Dorsolateral prefrontal cortex (tissue), 120 donors: ENCODE measurements at regions of chr19 and their contacts with region 1.

Region 1: GRCh38 chr19:2944775-2945574 is at the start of gene ZNF77:
- DNase-seq: peak; percentile 97 to 100 (median 99)
- H3K4me3 ChIP-seq: peak within 1 kb of the TSS; percentile 71 to 100 (median 92)
- H3K27ac ChIP-seq: peak within 1 kb of the TSS in 56 of 59 donors; percentile 4 to 93 (median 83)
- H3K27me3 ChIP-seq: no peaks in the 10 kb centered on the region
- CTCF ChIP-seq: peak in 34 of 56 donors; percentile 4 to 51 (median 27)
- total RNA-seq, gene ZNF77: 3.0 to 8.8 (median 4.8) TPM

Region 2: DNA sequence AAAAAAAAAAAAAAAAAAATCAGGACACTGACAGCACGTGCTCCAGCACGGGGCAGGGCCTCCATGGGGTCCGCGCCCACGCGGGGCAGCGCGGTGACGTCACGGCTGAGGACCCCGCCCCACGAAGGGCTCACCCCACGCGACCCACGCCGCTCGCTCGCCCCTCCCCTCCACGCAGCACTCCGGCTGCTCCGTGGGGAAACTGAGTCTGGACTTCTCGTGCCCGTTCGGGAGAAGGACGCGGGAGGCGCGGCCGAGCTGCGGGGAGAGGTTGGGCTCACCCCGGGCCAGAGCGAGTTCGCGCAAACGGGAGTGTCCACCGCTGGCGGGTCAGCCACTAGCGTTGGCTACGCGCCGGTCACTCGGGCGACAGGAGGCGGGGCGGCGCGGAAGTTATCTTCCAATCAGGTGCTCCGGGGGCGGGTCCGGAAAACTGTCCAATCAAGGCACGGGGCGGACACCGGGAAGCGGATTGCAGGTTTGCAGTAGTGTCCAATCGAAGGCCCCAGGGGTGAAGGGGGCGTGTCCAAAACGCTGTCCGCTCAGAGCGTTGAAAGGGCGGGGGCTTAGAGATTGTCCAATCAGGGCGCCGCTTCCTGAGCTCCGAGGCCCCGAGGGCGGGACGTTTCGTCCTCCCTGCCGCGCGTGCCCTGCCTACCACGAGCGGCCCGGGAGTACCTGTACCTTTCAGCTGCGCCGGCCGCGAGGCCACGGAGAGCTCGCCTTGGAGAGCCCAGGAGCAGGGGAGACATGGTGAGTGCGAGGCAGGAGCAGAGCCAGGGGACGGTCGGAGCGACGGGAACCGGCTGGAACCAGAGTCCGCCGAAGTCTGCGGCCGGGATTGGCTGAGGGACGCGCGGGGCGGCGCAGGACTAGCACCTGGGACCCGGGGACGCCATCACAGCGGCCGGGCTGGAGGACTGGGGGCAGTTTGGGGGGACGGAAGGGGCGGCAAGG is 44.4 kb before region 1 on chr19 and contains the start of gene ZNF57:
- intact Hi-C with region 1: loop called (anchors 2 to 5 kb)
- DNase-seq: peak; percentile 100
- H3K4me3 ChIP-seq: peak within 1 kb of the TSS; percentile 48 to 96 (median 81)
- H3K27ac ChIP-seq: peak within 1 kb of the TSS in 42 of 59 donors; percentile 19 to 86 (median 74)
- H3K27me3 ChIP-seq: no peaks in the 10 kb centered on the region
- CTCF ChIP-seq: peak in 23 of 56 donors; percentile 2 to 45 (median 20)
- total RNA-seq, gene ZNF57: 1.8 to 9.1 (median 4.6) TPM

Region 3: DNA sequence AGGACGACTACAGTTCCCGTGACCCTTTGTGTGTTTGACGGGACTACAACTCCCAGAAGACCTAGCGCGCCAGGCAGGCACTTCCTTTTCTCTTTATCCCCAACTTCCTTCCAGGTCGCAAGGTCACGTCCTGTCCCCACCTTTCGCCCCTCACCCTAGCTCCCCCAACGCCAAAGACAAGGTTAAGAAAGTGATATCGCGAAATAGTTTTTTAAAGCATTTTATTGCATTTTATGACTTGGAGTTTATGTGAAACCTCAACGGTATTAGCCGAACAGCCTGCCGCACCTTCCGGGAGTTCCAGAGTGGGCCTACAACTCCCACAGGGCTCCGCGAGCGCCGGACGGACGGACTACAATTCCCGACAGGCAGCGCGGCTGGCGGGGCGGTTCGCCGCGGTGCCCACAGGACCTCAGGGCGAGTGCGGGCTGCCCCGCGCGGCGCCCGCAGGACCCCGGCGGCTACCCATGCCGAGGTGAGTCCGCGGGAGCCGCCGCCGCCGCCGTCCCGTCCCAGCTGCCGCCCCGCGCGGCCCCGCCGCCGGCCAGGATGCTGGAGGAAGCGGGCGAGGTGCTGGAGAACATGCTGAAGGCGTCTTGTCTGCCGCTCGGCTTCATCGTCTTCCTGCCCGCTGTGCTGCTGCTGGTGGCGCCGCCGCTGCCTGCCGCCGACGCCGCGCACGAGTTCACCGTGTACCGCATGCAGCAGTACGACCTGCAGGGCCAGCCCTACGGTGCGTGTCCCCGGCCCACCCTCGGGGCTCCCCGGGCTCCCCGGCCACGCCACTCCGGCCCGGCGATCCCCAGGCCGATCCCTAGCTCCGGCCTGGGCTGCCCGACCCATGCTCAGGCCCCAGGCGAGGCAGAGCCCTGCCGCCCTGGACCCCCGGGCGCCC is 240.8 kb after region 1 on chr19 and contains the start of gene NCLN:
- intact Hi-C with region 1: loop called in 1 of 2 experiments (anchors 10 kb)
- DNase-seq: peak; percentile 94 to 96 (median 95)
- H3K4me3 ChIP-seq: peak within 1 kb of the TSS; percentile 74 to 100 (median 97)
- H3K27ac ChIP-seq: peak within 1 kb of the TSS; percentile 72 to 98 (median 93)
- H3K27me3 ChIP-seq: no peaks in the 10 kb centered on the region
- CTCF ChIP-seq: peak in 13 of 56 donors; percentile 1 to 47 (median 12)
- total RNA-seq, gene NCLN: 27.6 to 59.4 (median 41.0) TPM